ENCODE measurements at regions of chr3 and their contacts with region 1.

Region 1: GRCh38 chr3:3170998-3171397 is 8.5 kb downstream of the CRBN start:
- DNase-seq: no peak
- ATAC-seq: no peak
- H3K4me3 Mint-ChIP-seq: no peak overlapping the region
- H3K27ac Mint-ChIP-seq: peak overlapping the region; percentile 88
- H3K4me1 Mint-ChIP-seq: peaks cover 58% of the 10 kb centered on the region
- H3K27me3 Mint-ChIP-seq: no peaks in the 10 kb centered on the region
- CTCF ChIP-seq: peak; percentile 63

Region 2: GRCh38 chr3:3134750-3135448 is 36.1 kb before region 1 on chr3:
- CTCF ChIA-PET with region 1: interaction called, 14 read pairs
- POLR2A ChIA-PET with region 1: interaction called, 6 read pairs
- intact Hi-C with region 1: no loop called
- DNase-seq: no peak
- ATAC-seq: peak; percentile 69
- H3K4me3 Mint-ChIP-seq: no peak overlapping the region
- H3K27ac Mint-ChIP-seq: peak overlapping the region; percentile 81
- H3K4me1 Mint-ChIP-seq: peaks cover 45% of the 10 kb centered on the region
- H3K27me3 Mint-ChIP-seq: no peaks in the 10 kb centered on the region
- CTCF ChIP-seq: no peak

Region 3: GRCh38 chr3:3160826-3161225 is 10.2 kb before region 1 on chr3:
- CTCF ChIA-PET with region 1: interaction called, 29 read pairs
- POLR2A ChIA-PET with region 1: interaction called, 4 read pairs
- intact Hi-C with region 1: no loop called
- DNase-seq: no peak
- ATAC-seq: no peak
- H3K4me3 Mint-ChIP-seq: no peak overlapping the region
- H3K27ac Mint-ChIP-seq: peak overlapping the region; percentile 66
- H3K4me1 Mint-ChIP-seq: peaks cover 42% of the 10 kb centered on the region
- H3K27me3 Mint-ChIP-seq: no peaks in the 10 kb centered on the region
- CTCF ChIP-seq: no peak

Measured in activated CD8-positive, alpha-beta T cell treated with anti-CD3 and anti-CD28 coated beads for 36 hours (primary cell).